ENCODE measurements at regions of chr4 and their contacts with region 1.

Region 1: DNA sequence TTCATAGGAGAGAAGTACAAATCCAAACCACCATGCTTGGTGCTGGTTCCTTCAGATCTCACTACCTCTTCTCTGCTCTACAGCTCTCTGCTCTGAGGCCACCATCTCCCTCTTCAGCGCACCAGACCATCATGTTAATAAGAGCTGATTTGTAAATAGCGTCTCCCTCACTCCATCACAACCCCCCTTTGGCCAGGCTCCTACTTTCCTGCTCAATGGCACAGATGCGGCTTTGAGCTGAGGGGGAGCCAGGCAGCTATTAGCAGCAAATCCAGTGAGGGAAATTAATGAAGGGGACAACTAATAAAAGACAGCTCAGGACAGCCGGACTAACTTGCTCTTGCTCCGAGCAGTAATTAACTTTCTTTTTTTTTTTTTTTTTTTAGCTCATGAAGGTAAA is 13.1 kb downstream of the NEUROG2 start:
- DNase-seq: no peak
- ATAC-seq: no peak
- H3K4me3 ChIP-seq: no peak overlapping the region
- H3K4me3 Mint-ChIP-seq: no peak overlapping the region
- H3K27ac ChIP-seq: no peak overlapping the region
- H3K27ac Mint-ChIP-seq: no peak overlapping the region
- H3K4me1 ChIP-seq: no peaks in the 10 kb centered on the region
- H3K4me1 Mint-ChIP-seq: no peaks in the 10 kb centered on the region
- H3K27me3 ChIP-seq: peaks cover 10 to 17% of the 10 kb centered on the region in 2 experiments
- H3K27me3 Mint-ChIP-seq: peaks cover 46 to 57% of the 10 kb centered on the region in 2 donors

Region 2: GRCh38 chr4:112523764-112524505 is 21.1 kb after region 1 on chr4:
- CTCF ChIA-PET with region 1: interaction called, 3 to 10 read pairs
- POLR2A ChIA-PET with region 1: no interaction called
- DNase-seq: peak; percentile 26 to 82 (median 61)
- ATAC-seq: peak; percentile 78 to 88 (median 84)
- H3K4me3 ChIP-seq: peak overlapping the region; percentile 39 to 75
- H3K4me3 Mint-ChIP-seq: peak overlapping the region; percentile 84 to 92 (median 87)
- H3K27ac ChIP-seq: no peak overlapping the region
- H3K27ac Mint-ChIP-seq: no peak overlapping the region
- H3K4me1 ChIP-seq: peaks cover 7 to 32% of the 10 kb centered on the region in 2 experiments
- H3K4me1 Mint-ChIP-seq: peaks cover 27 to 39% (median 38%) of the 10 kb centered on the region in 3 donors
- H3K27me3 ChIP-seq: peaks cover 30 to 42% of the 10 kb centered on the region in 2 experiments
- H3K27me3 Mint-ChIP-seq: peaks cover 42 to 56% of the 10 kb centered on the region in 2 donors

Measured in T-cell (primary cell).